CD8-positive, alpha-beta T cell (primary cell): ENCODE measurements at regions of chr1 and their contacts with region 1.

Region 1: GRCh38 chr1:100459358-100460114 is 78.4 kb upstream of the GPR88 start:
- DNase-seq: peak; percentile 42 to 85 (median 61)
- ATAC-seq: peak; percentile 69
- H3K4me3 ChIP-seq: no peak overlapping the region
- H3K4me3 Mint-ChIP-seq: peak overlapping the region; percentile 8
- H3K27ac ChIP-seq: no peak overlapping the region
- H3K27ac Mint-ChIP-seq: peak overlapping the region; percentile 29
- H3K4me1 ChIP-seq: peaks cover 17% of the 10 kb centered on the region
- H3K4me1 Mint-ChIP-seq: peaks cover 55% of the 10 kb centered on the region
- H3K27me3 ChIP-seq: no peaks in the 10 kb centered on the region
- H3K27me3 Mint-ChIP-seq: no peaks in the 10 kb centered on the region
- CTCF ChIP-seq: peak; percentile 57

Region 2: DNA sequence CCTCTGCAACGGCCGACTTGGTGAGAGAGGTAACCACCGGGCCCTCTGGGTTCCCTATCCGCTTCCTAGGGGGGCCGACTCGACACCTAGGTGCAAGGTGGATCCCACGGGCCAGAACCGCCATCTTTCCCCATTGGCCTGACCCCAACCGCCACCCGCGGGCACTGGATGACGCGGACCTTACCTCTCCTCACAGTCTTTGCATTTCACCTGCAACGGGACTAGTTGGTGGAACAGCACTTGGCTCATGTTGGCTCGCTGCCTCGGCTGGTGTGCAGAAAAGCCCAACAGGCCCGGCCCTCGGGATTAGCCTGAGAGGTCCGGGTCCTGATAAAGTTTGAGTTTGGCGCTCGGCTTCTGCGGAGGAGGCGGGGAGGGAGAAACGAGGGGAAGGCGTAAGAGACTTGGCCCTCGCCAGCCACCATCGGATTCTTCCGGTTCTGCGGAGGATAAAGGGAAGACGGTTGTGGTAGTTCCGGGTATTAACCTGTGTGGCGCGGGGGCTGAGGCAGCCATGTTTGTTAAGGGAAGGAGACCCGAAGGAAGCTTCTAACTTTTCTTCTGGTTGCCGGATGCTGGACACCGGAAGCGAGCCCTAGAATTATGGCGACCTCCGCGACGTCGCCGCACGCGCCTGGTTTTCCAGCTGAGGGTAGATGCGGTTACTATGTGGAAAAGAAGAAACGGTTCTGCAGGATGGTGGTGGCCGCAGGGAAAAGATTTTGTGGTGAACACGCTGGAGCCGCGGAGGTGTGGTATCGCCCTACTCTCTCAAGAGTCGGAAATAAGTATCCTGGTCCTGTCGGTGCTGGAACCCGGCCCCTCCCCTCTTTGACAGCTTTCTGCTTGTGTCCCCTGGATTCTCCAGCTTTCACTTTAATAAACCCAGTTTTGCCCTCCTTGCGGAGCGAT is 326.7 kb before region 1 on chr1 and contains the starts of genes SASS6 and TRMT13:
- CTCF ChIA-PET with region 1: interaction called, 3 read pairs
- POLR2A ChIA-PET with region 1: interaction called, 3 read pairs
- intact Hi-C with region 1: loop called (anchors 5 kb)
- DNase-seq: peak; percentile 86 to 97 (median 93)
- ATAC-seq: peak; percentile 97
- H3K4me3 ChIP-seq: peak within 1 kb of the TSS; percentile 83
- H3K4me3 Mint-ChIP-seq: peak within 1 kb of the TSS; percentile 99
- H3K27ac ChIP-seq: peak within 1 kb of the TSS; percentile 71 to 72
- H3K27ac Mint-ChIP-seq: peak within 1 kb of the TSS; percentile 98
- H3K4me1 ChIP-seq: peaks cover 14% of the 10 kb centered on the region
- H3K4me1 Mint-ChIP-seq: peaks cover 44% of the 10 kb centered on the region
- H3K27me3 ChIP-seq: no peaks in the 10 kb centered on the region
- H3K27me3 Mint-ChIP-seq: no peaks in the 10 kb centered on the region
- CTCF ChIP-seq: no peak
- total RNA-seq, gene SASS6: 1.2 TPM
- total RNA-seq, gene TRMT13: 6.5 to 7.2 TPM

Region 3: DNA sequence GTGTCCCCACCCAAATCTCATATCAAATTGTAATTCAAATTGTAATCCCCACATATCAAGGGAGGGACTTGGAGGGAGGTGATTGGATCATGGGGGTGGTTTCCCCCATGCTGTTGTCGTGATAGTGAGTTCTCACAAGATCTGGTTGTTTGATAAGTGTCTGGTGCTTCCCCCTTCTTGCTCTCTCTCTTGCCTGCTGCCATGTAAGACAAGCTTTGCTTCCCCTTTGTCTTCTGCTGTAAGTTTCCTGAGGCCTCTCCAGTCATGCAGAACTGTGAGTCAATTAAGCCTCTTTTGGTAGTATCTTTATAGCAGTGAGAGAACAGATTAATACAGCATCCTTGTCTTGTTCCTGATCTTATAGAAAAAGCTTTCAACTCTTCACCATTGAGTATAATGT is 275.0 kb before region 1 on chr1:
- CTCF ChIA-PET with region 1: no interaction called
- POLR2A ChIA-PET with region 1: no interaction called
- intact Hi-C with region 1: no loop called
- DNase-seq: peak in 1 of 9 experiments; percentile 5
- ATAC-seq: no peak
- H3K4me3 ChIP-seq: no peak overlapping the region
- H3K4me3 Mint-ChIP-seq: no peak overlapping the region
- H3K27ac ChIP-seq: no peak overlapping the region
- H3K27ac Mint-ChIP-seq: no peak overlapping the region
- H3K4me1 ChIP-seq: no peaks in the 10 kb centered on the region
- H3K4me1 Mint-ChIP-seq: no peaks in the 10 kb centered on the region
- H3K27me3 ChIP-seq: no peaks in the 10 kb centered on the region
- H3K27me3 Mint-ChIP-seq: no peaks in the 10 kb centered on the region
- CTCF ChIP-seq: no peak

Region 4: GRCh38 chr1:100277866-100278265 is 181.7 kb before region 1 on chr1:
- CTCF ChIA-PET with region 1: interaction called, 11 read pairs
- POLR2A ChIA-PET with region 1: no interaction called
- intact Hi-C with region 1: loop called (anchors 2 kb)
- DNase-seq: peak in 4 of 9 experiments; percentile 12 to 56 (median 40)
- ATAC-seq: peak; percentile 77
- H3K4me3 ChIP-seq: no peak overlapping the region
- H3K4me3 Mint-ChIP-seq: no peak overlapping the region
- H3K27ac ChIP-seq: no peak overlapping the region
- H3K27ac Mint-ChIP-seq: no peak overlapping the region
- H3K4me1 ChIP-seq: no peaks in the 10 kb centered on the region
- H3K4me1 Mint-ChIP-seq: peaks cover 38% of the 10 kb centered on the region
- H3K27me3 ChIP-seq: no peaks in the 10 kb centered on the region
- H3K27me3 Mint-ChIP-seq: no peaks in the 10 kb centered on the region
- CTCF ChIP-seq: no peak

Region 5: GRCh38 chr1:100387209-100387608 is 72.3 kb before region 1 on chr1:
- CTCF ChIA-PET with region 1: interaction called, 15 read pairs
- POLR2A ChIA-PET with region 1: interaction called, 3 read pairs
- intact Hi-C with region 1: loop called in 1 of 2 experiments (anchors 5 kb)
- DNase-seq: peak in 1 of 9 experiments; percentile 43
- ATAC-seq: no peak
- H3K4me3 ChIP-seq: peak overlapping the region; percentile 3 to 6
- H3K4me3 Mint-ChIP-seq: peak overlapping the region; percentile 76
- H3K27ac ChIP-seq: peak overlapping the region; percentile 22 to 65
- H3K27ac Mint-ChIP-seq: peak overlapping the region; percentile 88
- H3K4me1 ChIP-seq: peaks cover 61% of the 10 kb centered on the region
- H3K4me1 Mint-ChIP-seq: peaks cover 88% of the 10 kb centered on the region
- H3K27me3 ChIP-seq: no peaks in the 10 kb centered on the region
- H3K27me3 Mint-ChIP-seq: no peaks in the 10 kb centered on the region
- CTCF ChIP-seq: no peak

Region 6: DNA sequence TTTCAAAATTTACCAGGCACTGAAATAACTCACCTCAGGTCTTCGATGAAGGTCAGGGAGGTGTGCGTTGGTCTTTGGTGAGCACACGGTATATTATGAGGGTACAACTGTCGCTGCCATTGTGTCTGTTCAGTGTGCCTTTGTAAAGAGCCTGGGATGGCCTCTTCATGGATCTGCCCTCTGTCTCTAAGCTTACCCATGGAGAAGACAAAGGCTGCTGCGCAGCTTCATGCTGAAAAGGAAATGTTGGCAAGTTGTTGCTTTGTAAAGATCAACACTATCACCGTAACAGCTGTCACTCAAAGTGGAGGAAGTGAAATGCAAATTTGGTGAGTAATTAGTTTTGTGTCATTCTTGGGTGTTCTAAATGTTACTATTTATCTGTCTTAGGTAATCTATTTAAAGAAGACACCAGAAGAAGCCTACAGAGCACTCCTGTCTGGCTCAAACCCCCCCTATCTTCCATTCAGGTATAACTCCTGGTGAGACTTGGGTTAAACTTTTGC is 35.7 kb before region 1 on chr1:
- CTCF ChIA-PET with region 1: interaction called, 24 read pairs
- POLR2A ChIA-PET with region 1: interaction called, 3 read pairs
- intact Hi-C with region 1: loop called in 1 of 2 experiments (anchors 5 kb)
- DNase-seq: peak in 5 of 9 experiments; percentile 13 to 47 (median 31)
- ATAC-seq: peak; percentile 75
- H3K4me3 ChIP-seq: peak overlapping the region in 1 of 2 experiments; percentile 33
- H3K4me3 Mint-ChIP-seq: peak overlapping the region; percentile 75
- H3K27ac ChIP-seq: peak overlapping the region; percentile 2 to 44
- H3K27ac Mint-ChIP-seq: peak overlapping the region; percentile 89
- H3K4me1 ChIP-seq: peaks cover 31% of the 10 kb centered on the region
- H3K4me1 Mint-ChIP-seq: peaks cover 74% of the 10 kb centered on the region
- H3K27me3 ChIP-seq: no peaks in the 10 kb centered on the region
- H3K27me3 Mint-ChIP-seq: no peaks in the 10 kb centered on the region
- CTCF ChIP-seq: no peak

Region 7: GRCh38 chr1:100810360-100810759 is 350.8 kb after region 1 on chr1:
- CTCF ChIA-PET with region 1: no interaction called
- POLR2A ChIA-PET with region 1: no interaction called
- intact Hi-C with region 1: no loop called
- DNase-seq: no peak
- ATAC-seq: no peak
- H3K4me3 ChIP-seq: no peak overlapping the region
- H3K4me3 Mint-ChIP-seq: no peak overlapping the region
- H3K27ac ChIP-seq: no peak overlapping the region
- H3K27ac Mint-ChIP-seq: no peak overlapping the region
- H3K4me1 ChIP-seq: no peaks in the 10 kb centered on the region
- H3K4me1 Mint-ChIP-seq: peaks cover 3% of the 10 kb centered on the region
- H3K27me3 ChIP-seq: no peaks in the 10 kb centered on the region
- H3K27me3 Mint-ChIP-seq: peaks cover 15% of the 10 kb centered on the region
- CTCF ChIP-seq: no peak

Region 8: GRCh38 chr1:100866041-100866900 is 406.7 kb after region 1 on chr1:
- CTCF ChIA-PET with region 1: interaction called, 16 read pairs
- POLR2A ChIA-PET with region 1: no interaction called
- intact Hi-C with region 1: loop called (anchors 1 to 2 kb)
- DNase-seq: peak in 2 of 9 experiments; percentile 40 to 57
- ATAC-seq: no peak
- H3K4me3 ChIP-seq: no peak overlapping the region
- H3K4me3 Mint-ChIP-seq: no peak overlapping the region
- H3K27ac ChIP-seq: no peak overlapping the region
- H3K27ac Mint-ChIP-seq: no peak overlapping the region
- H3K4me1 ChIP-seq: no peaks in the 10 kb centered on the region
- H3K4me1 Mint-ChIP-seq: no peaks in the 10 kb centered on the region
- H3K27me3 ChIP-seq: peaks cover 0 to 3% of the 10 kb centered on the region in 2 experiments
- H3K27me3 Mint-ChIP-seq: no peaks in the 10 kb centered on the region
- CTCF ChIP-seq: peak; percentile 50